ENCODE measurements at regions of chr19 and their contacts with region 1.

Region 1: DNA sequence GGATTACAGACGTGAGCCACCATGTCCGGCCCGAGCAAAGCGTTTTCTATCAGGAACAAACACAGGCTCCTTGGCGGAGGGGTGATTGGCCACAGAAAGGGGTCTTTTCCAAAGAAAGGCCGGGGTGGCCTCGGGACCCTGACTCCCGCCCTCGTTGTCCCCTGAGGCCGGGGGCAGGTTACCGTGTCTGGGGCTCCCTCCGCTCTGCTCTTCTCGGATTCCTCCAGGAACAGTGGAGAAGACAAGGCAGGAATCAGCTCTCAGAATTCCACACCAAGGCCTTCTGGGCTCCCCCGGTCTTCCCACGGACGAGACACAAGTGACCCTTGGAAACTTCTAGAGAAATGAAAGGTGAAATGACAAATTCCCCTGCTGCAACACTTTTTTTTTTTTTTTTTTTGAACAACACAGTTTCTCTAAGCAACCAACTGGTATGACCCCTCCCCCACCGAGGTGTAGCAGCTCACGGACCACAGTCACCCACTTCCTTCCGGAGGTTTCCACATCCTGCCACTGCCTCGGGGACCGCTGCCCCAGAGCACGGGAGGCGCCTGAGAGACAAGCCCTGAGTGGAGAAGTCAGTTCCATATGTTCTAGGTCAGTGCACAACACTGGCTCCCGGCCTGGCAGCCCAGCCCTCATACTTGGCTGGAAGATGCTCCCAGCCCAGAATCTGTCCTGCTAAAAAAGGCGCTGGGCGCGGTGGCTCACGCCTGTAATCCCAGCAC is 11.0 kb downstream of the MOB3A start:
- DNase-seq: peak; percentile 94 to 99
- ATAC-seq: peak; percentile 28 to 78 (median 68)
- H3K4me3 ChIP-seq: peak overlapping the region; percentile 91
- H3K4me3 Mint-ChIP-seq: peak overlapping the region; percentile 99
- H3K27ac ChIP-seq: peak overlapping the region; percentile 98
- H3K27ac Mint-ChIP-seq: peak overlapping the region; percentile 95 to 99
- H3K4me1 ChIP-seq: peaks cover 87% of the 10 kb centered on the region
- H3K4me1 Mint-ChIP-seq: peaks cover 74 to 77% of the 10 kb centered on the region in 2 donors
- H3K27me3 ChIP-seq: no peaks in the 10 kb centered on the region
- H3K27me3 Mint-ChIP-seq: no peaks in the 10 kb centered on the region
- CTCF ChIP-seq: no peak

Region 2: DNA sequence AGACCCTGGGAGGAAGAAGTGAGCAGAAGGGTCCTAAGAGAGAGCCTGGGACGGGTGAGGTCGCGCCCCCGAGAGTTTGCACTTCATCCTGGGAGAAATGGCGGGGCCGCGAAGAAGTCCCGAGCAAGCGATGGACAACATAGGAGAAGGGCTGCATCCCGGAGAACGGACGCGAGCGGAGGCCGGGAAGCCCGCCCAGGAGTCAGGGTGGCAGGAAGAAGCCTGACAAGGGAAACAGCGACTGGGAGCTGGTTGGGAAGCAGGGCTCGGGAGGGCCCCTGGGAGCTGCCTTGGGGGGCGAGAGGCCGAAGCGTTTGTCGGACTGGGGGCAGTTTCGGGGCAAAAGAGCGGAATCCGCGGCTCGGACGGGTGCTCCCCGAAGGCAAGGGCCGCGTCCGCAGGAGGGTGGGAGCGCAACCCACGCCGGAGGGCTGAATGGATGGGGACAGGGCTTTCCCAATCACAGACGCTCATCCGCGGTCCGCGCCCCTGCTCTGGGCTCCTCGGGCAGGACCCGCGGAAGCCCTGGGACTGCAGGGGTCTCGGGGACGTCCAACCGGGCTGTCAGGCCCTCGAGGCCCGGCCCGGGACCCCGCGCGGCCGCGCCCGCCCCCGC is 200.3 kb before region 1 on chr19:
- intact Hi-C with region 1: loop called (anchors 5 kb)
- DNase-seq: peak in 1 of 2 donors; percentile 41
- ATAC-seq: peak in 2 of 3 donors; percentile 1 to 2
- H3K4me3 ChIP-seq: peak overlapping the region; percentile 99
- H3K4me3 Mint-ChIP-seq: peak overlapping the region; percentile 100
- H3K27ac ChIP-seq: peak overlapping the region; percentile 99
- H3K27ac Mint-ChIP-seq: peak overlapping the region; percentile 97 to 99
- H3K4me1 ChIP-seq: peaks cover 54% of the 10 kb centered on the region
- H3K4me1 Mint-ChIP-seq: peaks cover 40 to 43% of the 10 kb centered on the region in 2 donors
- H3K27me3 ChIP-seq: no peaks in the 10 kb centered on the region
- H3K27me3 Mint-ChIP-seq: no peaks in the 10 kb centered on the region
- CTCF ChIP-seq: no peak

Region 3: GRCh38 chr19:1896508-1896907 is 188.6 kb before region 1 on chr19:
- intact Hi-C with region 1: loop called (anchors 5 kb)
- DNase-seq: peak in 1 of 2 donors; percentile 31
- ATAC-seq: no peak
- H3K4me3 ChIP-seq: no peak overlapping the region
- H3K4me3 Mint-ChIP-seq: peak overlapping the region; percentile 89
- H3K27ac ChIP-seq: peak overlapping the region; percentile 83
- H3K27ac Mint-ChIP-seq: peak overlapping the region; percentile 93 to 98
- H3K4me1 ChIP-seq: peaks cover 49% of the 10 kb centered on the region
- H3K4me1 Mint-ChIP-seq: peaks cover 12 to 30% of the 10 kb centered on the region in 2 donors
- H3K27me3 ChIP-seq: no peaks in the 10 kb centered on the region
- H3K27me3 Mint-ChIP-seq: no peaks in the 10 kb centered on the region
- CTCF ChIP-seq: no peak

Region 4: GRCh38 chr19:2050991-2051772 is 34.0 kb before region 1 on chr19 and contains the start of gene MKNK2:
- intact Hi-C with region 1: loop called (anchors 2 kb)
- DNase-seq: peak; percentile 97
- ATAC-seq: peak; percentile 81 to 93 (median 84)
- H3K4me3 ChIP-seq: peak within 1 kb of the TSS; percentile 91
- H3K4me3 Mint-ChIP-seq: peak within 1 kb of the TSS; percentile 85
- H3K27ac ChIP-seq: peak within 1 kb of the TSS; percentile 95
- H3K27ac Mint-ChIP-seq: peak within 1 kb of the TSS; percentile 82 to 89
- H3K4me1 ChIP-seq: peaks cover 77% of the 10 kb centered on the region
- H3K4me1 Mint-ChIP-seq: peaks cover 10 to 42% of the 10 kb centered on the region in 2 donors
- H3K27me3 ChIP-seq: no peaks in the 10 kb centered on the region
- H3K27me3 Mint-ChIP-seq: no peaks in the 10 kb centered on the region
- CTCF ChIP-seq: peak; percentile 33
- total RNA-seq, gene MKNK2: 259 to 389 (median 322) TPM

Region 5: DNA sequence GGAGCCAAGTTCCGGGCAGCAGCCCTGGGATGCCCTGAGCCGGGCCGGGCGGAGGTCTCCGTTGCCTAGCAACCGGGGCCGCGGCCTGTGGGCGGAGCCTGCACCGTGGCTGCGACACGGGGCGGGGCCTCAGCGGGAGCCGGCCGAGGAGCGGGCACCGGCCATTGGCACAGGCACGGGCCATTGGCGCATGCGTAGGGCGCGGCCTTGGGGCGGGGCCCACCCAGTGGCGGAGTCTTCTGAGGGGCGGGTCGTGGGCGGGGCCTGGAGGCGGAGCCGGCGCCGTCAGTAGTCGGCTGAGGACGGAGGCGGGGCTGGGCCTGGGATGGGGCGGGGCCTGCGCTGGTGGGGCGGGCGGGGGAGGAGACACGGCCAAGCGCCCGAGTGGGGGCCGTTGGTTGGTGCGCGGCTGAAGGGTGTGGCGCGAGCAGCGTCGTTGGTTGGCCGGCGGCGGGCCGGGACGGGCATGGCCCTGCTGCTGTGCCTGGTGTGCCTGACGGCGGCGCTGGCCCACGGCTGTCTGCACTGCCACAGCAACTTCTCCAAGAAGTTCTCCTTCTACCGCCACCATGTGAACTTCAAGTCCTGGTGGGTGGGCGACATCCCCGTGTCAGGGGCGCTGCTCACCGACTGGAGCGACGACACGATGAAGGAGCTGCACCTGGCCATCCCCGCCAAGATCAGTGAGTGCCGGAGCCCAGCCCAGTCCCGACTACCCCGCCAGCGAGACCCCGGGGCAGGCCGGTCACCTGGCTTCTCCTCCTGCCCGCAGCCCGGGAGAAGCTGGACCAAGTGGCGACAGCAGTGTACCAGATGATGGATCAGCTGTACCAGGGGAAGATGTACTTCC is 11.5 kb after region 1 on chr19 and contains the start of gene IZUMO4:
- intact Hi-C with region 1: loop called (anchors 1 kb)
- DNase-seq: peak; percentile 99
- ATAC-seq: peak; percentile 80 to 92 (median 83)
- H3K4me3 ChIP-seq: peak within 1 kb of the TSS; percentile 69
- H3K4me3 Mint-ChIP-seq: peak within 1 kb of the TSS; percentile 98
- H3K27ac ChIP-seq: peak within 1 kb of the TSS; percentile 87
- H3K27ac Mint-ChIP-seq: peak within 1 kb of the TSS; percentile 88 to 90
- H3K4me1 ChIP-seq: peaks cover 52% of the 10 kb centered on the region
- H3K4me1 Mint-ChIP-seq: peaks cover 19 to 35% of the 10 kb centered on the region in 2 donors
- H3K27me3 ChIP-seq: no peaks in the 10 kb centered on the region
- H3K27me3 Mint-ChIP-seq: no peaks in the 10 kb centered on the region
- CTCF ChIP-seq: peak; percentile 25
- total RNA-seq, gene IZUMO4: 3.3 to 7.6 (median 7.1) TPM

Region 6: DNA sequence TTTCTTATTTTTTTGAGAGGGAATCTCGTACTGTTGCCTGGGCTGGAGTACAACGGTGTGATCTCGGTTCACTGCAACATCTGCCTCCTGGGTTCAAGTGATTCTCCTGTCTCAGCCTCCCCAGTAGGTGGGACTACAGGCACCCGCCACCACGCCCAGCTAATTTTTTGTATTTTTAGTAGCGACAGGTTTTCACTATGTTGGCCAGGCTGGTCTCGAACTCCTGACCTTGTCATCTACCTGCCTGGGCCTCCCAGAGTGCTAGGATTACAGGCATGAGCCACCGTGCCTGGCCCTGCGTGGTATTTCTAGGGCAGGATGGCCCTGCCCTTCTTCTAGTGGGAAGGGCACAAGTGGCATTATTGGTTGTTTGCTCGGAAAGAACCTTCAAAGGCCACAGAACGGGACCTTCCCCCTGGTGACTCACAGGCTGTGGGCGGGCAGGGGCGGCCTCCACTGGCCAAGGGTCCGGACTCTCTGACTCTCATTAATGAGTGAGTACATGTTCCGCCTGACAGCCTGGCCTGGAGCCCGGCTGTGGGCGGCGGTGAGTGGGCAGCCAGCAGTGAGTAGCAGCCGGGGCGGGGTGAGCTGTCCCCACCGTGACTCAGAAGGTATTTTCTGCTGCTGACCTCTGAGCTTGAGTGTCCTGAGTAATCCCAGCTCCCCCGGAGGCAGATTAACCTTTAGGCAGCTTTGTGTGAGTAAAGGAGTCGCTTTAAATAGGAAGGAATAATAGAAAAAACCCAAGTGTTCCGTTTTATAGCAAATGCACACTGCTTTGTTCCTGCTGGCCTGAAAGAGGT is 83.7 kb after region 1 on chr19:
- intact Hi-C with region 1: loop called (anchors 5 kb)
- DNase-seq: peak; percentile 70 to 86
- ATAC-seq: peak; percentile 68 to 87 (median 74)
- H3K4me3 ChIP-seq: peak overlapping the region; percentile 12
- H3K4me3 Mint-ChIP-seq: peak overlapping the region; percentile 89
- H3K27ac ChIP-seq: peak overlapping the region; percentile 95
- H3K27ac Mint-ChIP-seq: peak overlapping the region; percentile 94 to 98
- H3K4me1 ChIP-seq: peaks cover 75% of the 10 kb centered on the region
- H3K4me1 Mint-ChIP-seq: peaks cover 43 to 59% of the 10 kb centered on the region in 2 donors
- H3K27me3 ChIP-seq: no peaks in the 10 kb centered on the region
- H3K27me3 Mint-ChIP-seq: no peaks in the 10 kb centered on the region
- CTCF ChIP-seq: no peak

Region 7: DNA sequence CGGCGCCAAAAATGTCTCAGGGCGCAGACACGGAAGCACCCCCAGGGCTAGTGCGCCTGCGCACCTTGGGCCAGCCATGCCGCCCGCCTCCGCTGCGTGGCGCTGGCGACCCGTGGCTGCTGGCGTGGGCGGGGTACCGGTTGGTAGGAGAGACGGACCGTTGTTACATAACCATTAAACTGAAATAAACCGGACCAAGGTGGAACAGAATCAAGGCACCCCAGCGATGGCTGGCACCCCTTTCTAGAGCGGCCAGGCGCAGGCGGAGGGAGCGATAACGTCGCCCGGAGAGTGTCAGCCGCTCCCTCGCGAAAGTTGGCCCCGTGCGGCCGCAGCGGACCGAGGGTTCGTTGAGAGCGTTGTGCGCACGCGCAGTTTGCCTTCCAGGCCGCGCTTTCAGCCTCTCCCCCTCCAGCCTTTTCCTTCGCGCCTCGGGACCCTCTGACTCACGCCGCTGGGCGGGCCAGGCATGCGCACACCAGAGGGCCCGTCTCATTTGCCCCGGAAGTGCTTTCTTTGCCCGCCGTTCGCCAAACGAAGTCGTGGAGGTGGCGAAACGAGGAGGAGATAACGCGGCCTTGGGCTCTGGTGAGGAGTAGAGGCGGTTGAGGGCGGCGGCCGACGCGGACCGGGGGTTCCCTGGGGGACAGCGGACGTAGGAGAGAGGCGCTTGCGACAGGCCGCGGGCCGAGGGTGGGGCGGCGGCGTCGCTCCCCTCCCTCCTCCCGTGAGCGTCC is 151.3 kb after region 1 on chr19 and contains the starts of genes PLEKHJ1 and SF3A2:
- intact Hi-C with region 1: loop called (anchors 5 kb)
- DNase-seq: peak; percentile 100
- ATAC-seq: peak; percentile 80 to 92 (median 81)
- H3K4me3 ChIP-seq: peak within 1 kb of the TSS; percentile 65
- H3K4me3 Mint-ChIP-seq: peak within 1 kb of the TSS; percentile 94
- H3K27ac ChIP-seq: peak within 1 kb of the TSS; percentile 99
- H3K27ac Mint-ChIP-seq: peak within 1 kb of the TSS; percentile 98 to 100
- H3K4me1 ChIP-seq: peaks cover 66% of the 10 kb centered on the region
- H3K4me1 Mint-ChIP-seq: peaks cover 56 to 67% of the 10 kb centered on the region in 2 donors
- H3K27me3 ChIP-seq: no peaks in the 10 kb centered on the region
- H3K27me3 Mint-ChIP-seq: no peaks in the 10 kb centered on the region
- CTCF ChIP-seq: peak; percentile 96
- total RNA-seq, gene PLEKHJ1: 36.7 to 45.8 (median 44.7) TPM
- total RNA-seq, gene SF3A2: 143 to 165 (median 147) TPM

Measured in natural killer cell (primary cell).